Ovary (tissue), 10 donors: ENCODE measurements at regions of chr9 and their contacts with region 1.

Region 1: DNA sequence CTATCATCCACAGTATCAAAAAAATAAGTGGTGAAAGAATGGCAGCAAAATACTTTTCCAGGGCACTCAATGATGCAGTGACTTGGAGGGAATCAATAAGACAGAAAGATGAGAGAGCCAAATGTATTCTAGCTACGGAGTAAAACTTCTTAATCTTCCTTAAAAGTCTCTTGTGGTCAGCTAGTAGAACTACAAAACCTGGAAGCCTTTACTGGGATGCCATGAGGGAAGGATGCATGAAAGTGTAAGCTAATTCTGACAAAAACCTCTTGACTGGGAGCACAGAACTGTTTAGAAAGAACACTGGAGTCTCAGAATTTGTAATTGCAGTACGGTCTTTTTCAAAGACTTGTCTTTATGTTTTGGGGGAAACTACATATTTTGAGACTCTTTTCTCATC is 432.8 kb upstream of the PTPRD start:
- DNase-seq: no peak
- H3K4me3 ChIP-seq: no peak overlapping the region
- H3K27ac ChIP-seq: no peak overlapping the region
- H3K4me1 ChIP-seq: no peaks in the 10 kb centered on the region
- H3K27me3 ChIP-seq: no peaks in the 10 kb centered on the region
- CTCF ChIP-seq: no peak
- EP300 ChIP-seq: no peak
- POLR2A ChIP-seq: no peak

Region 2: GRCh38 chr9:11025775-11026174 is 19.8 kb before region 1 on chr9:
- intact Hi-C with region 1: loop called in 1 of 4 experiments (anchors 2 kb)
- DNase-seq: no peak
- H3K4me3 ChIP-seq: no peak overlapping the region
- H3K27ac ChIP-seq: no peak overlapping the region
- H3K4me1 ChIP-seq: no peaks in the 10 kb centered on the region
- H3K27me3 ChIP-seq: no peaks in the 10 kb centered on the region
- CTCF ChIP-seq: no peak
- EP300 ChIP-seq: no peak
- POLR2A ChIP-seq: no peak